A549 (cell line): ENCODE measurements at regions of chr17 and their contacts with region 1.

Region 1: DNA sequence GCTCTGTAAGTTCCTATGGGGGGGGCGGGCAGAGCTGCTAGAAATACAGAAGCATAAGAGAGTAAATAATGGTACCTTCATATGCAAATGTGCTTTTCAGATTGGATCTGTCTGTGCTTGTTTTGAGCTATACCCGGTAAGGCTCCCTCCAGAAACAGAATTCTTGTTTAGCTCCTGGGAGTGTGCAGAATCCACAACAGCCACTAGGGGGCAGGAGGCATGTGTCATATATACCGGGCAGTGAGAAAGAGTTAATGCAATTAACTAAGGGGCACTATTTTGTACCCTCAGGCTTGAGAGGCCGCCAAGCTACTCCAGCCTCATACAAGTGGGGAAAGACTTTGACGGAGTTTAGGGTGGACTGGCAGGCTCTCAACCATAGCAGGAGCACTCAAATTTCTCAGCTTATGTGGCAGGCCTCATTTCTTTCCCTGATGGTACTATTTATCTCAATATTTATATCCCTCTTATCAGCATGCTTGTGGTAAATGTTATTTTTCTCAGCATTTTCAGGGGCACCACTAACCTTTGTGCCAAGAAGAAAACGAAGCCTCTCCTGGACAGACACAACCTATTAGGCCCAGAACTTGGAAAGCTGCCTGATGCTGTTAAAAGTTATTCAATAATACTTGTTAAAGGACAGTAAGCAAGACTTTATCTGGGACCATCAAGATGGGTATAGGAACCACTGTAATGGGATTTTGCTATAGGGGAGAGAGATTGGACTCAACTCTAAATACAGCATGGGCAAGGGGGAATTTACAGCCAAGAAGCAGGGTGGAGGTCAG is 10.7 kb upstream of the CENPV start:
- DNase-seq: peak; percentile 83 to 84
- ATAC-seq: peak; percentile 96 to 97
- H3K4me3 ChIP-seq: no peak overlapping the region
- H3K27ac ChIP-seq: peak overlapping the region in 1 of 2 experiments; percentile 38; a peak in 3 of 6 replicates
- H3K4me1 ChIP-seq: peaks cover 7% of the 10 kb centered on the region; the same call in 1 of the 3 replicates
- CTCF ChIP-seq: peak; percentile 97
- EP300 ChIP-seq: no peak
- POLR2A ChIP-seq: no peak
- RAD21 ChIP-seq: peak; percentile 86 to 87

Region 2: GRCh38 chr17:16293931-16294330 is 70.0 kb before region 1 on chr17:
- CTCF ChIA-PET with region 1: interaction called, 16 read pairs
- POLR2A ChIA-PET with region 1: no interaction called
- DNase-seq: no peak
- ATAC-seq: 0 out of 6 replicates have a peak, but pooled peaks of 1 of the 2 experiments have one; percentile 6
- H3K4me3 ChIP-seq: no peak overlapping the region
- H3K27ac ChIP-seq: peak overlapping the region in 1 of 2 experiments; percentile 42; a peak in 3 of 6 replicates
- H3K4me1 ChIP-seq: peaks cover 40% of the 10 kb centered on the region
- CTCF ChIP-seq: no peak
- EP300 ChIP-seq: no peak
- POLR2A ChIP-seq: no peak
- RAD21 ChIP-seq: no peak

Region 3: GRCh38 chr17:16329519-16330271 is 34.2 kb before region 1 on chr17:
- CTCF ChIA-PET with region 1: interaction called, 15 read pairs
- POLR2A ChIA-PET with region 1: no interaction called
- DNase-seq: peak; percentile 64 to 67
- ATAC-seq: peak; percentile 87 to 88
- H3K4me3 ChIP-seq: 0 out of 3 replicates have a peak overlapping the region, but pooled peaks have one; percentile 5
- H3K27ac ChIP-seq: peak overlapping the region; percentile 62 to 79
- H3K4me1 ChIP-seq: peaks cover 39% of the 10 kb centered on the region
- CTCF ChIP-seq: no peak
- EP300 ChIP-seq: no peak
- POLR2A ChIP-seq: no peak
- RAD21 ChIP-seq: no peak

Region 4: DNA sequence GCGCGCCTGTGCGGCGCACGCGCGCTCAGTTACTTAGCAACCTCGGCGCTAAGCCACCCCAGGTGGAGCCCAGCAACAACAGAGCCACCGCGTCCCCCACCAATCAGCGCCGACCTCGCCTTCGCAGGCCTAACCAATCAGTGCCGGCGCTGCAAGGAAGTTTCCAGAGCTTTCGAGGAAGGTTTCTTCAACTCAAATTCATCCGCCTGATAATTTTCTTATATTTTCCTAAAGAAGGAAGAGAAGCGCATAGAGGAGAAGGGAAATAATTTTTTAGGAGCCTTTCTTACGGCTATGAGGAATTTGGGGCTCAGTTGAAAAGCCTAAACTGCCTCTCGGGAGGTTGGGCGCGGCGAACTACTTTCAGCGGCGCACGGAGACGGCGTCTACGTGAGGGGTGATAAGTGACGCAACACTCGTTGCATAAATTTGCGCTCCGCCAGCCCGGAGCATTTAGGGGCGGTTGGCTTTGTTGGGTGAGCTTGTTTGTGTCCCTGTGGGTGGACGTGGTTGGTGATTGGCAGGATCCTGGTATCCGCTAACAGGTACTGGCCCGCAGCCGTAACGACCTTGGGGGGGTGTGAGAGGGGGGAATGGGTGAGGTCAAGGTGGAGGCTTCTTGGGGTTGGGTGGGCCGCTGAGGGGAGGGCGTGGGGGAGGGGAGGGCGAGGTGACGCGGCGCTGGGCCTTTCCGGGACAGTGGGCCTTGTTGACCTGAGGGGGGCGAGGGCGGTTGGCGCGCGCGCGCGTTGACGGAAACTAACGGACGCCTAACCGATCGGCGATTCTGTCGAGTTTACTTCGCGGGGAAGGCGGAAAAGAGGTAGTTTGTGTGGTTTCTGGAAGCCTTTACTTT is 16.9 kb after region 1 on chr17 and contains the start of gene UBB:
- CTCF ChIA-PET with region 1: interaction called, 132 read pairs
- POLR2A ChIA-PET with region 1: interaction called, 30 read pairs
- DNase-seq: peak; percentile 92 to 100
- ATAC-seq: peak; percentile 93
- H3K4me3 ChIP-seq: peak within 1 kb of the TSS; percentile 88
- H3K27ac ChIP-seq: peak within 1 kb of the TSS; percentile 91 to 95
- H3K4me1 ChIP-seq: peaks cover 43% of the 10 kb centered on the region
- CTCF ChIP-seq: no peak
- EP300 ChIP-seq: peak; percentile 12 to 56; a peak in 2 of 5 replicates
- POLR2A ChIP-seq: peak; percentile 100
- RAD21 ChIP-seq: no peak
- polyA plus RNA-seq, gene UBB: 2,851 and 4,311 TPM in 2 replicates

Region 5: DNA sequence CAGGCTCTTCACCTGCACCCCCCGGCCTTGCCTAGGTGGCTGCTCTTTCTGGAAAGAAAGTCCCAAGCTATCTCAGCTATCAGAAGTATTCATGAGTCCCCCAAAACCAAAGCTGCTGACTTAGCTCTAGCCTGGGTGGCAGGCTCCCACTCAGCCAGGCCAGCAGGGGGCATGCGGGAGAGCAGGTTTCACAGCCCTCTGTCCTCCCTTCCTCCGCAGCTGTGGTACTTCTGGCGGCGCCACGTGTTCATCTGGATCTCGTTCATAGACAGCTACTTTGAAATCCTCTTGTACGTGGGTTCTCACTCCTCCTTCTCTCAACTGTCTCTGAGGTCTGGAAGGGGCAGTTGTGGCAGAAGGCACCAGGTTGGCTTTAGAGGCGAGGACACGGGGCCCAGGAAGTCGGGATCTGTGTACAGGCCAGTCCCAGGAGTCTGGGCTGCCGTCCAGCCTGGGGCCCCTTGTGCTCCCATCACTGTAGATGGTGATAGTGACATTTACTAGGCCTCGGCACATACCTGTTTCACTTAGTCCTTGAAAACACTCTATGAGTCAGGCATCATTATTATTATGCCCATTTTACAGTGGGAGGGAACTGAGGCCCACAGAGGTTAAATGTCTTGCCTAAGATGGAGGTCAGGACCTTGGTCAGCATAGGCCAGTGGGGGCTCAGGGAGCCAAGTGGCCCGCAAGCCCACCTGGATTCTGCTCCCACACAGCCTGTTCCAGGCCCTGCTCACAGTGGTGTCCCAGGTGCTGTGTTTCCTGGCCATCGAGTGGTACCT is 64.3 kb after region 1 on chr17:
- CTCF ChIA-PET with region 1: interaction called, 42 read pairs
- POLR2A ChIA-PET with region 1: no interaction called
- DNase-seq: peak; percentile 83 to 93
- ATAC-seq: peak; percentile 83 to 96
- H3K4me3 ChIP-seq: no peak overlapping the region
- H3K27ac ChIP-seq: peak overlapping the region; percentile 50 to 70; a peak in 5 of 6 replicates
- H3K4me1 ChIP-seq: 0 out of 3 replicates have a peak, but pooled peaks cover 3% of the 10 kb centered on the region
- CTCF ChIP-seq: peak; percentile 71
- EP300 ChIP-seq: no peak
- POLR2A ChIP-seq: no peak
- RAD21 ChIP-seq: peak; percentile 48 to 61; a peak in 4 of 5 replicates

Region 6: DNA sequence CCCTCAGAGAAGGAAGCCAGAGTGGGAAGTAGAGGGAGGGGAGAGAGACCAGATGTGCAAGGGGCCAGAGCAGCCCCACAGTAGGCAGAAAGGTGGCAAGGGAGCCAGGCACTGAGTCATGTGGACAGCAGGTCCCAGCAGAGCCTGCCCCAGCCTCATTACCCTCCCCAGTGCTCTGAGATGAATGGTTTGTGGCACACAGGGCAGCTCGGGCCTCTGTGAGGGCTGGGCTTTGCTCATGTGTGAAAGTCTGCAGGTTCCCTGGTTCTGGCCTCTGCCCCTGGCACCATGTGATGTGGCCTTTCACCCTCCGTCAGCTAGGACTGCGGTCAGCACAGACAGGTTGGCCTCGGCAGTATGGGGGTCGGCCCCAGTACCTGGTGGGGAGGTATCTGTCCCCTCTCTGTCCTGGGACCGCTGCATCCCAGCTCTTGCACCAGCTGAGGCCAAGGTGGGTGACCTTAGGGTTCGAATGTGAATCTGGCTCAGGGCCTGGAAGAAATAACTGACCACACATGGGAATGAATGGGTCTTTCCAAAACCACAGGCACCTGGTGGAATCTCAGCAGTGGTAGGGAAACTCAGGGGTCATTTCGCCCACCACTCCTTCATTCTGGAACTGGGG is 119.2 kb after region 1 on chr17:
- CTCF ChIA-PET with region 1: no interaction called
- POLR2A ChIA-PET with region 1: no interaction called
- DNase-seq: no peak
- ATAC-seq: no peak
- H3K4me3 ChIP-seq: no peak overlapping the region
- H3K27ac ChIP-seq: no peak overlapping the region
- H3K4me1 ChIP-seq: peaks cover 9% of the 10 kb centered on the region; the same call in 2 of the 3 replicates
- CTCF ChIP-seq: no peak
- EP300 ChIP-seq: no peak
- POLR2A ChIP-seq: no peak
- RAD21 ChIP-seq: no peak

Region 7: GRCh38 chr17:16521070-16521727 is 157.3 kb after region 1 on chr17:
- CTCF ChIA-PET with region 1: interaction called, 76 read pairs
- POLR2A ChIA-PET with region 1: no interaction called
- DNase-seq: peak; percentile 95 to 98
- ATAC-seq: peak; percentile 95 to 97
- H3K4me3 ChIP-seq: no peak overlapping the region
- H3K27ac ChIP-seq: peak overlapping the region; percentile 58 to 80
- H3K4me1 ChIP-seq: peaks cover 17% of the 10 kb centered on the region
- CTCF ChIP-seq: peak; percentile 99
- EP300 ChIP-seq: no peak
- POLR2A ChIP-seq: no peak
- RAD21 ChIP-seq: peak; percentile 98 to 100